HCT116 (cell line): ENCODE measurements at regions of chr5 and their contacts with region 1.

Region 1: DNA sequence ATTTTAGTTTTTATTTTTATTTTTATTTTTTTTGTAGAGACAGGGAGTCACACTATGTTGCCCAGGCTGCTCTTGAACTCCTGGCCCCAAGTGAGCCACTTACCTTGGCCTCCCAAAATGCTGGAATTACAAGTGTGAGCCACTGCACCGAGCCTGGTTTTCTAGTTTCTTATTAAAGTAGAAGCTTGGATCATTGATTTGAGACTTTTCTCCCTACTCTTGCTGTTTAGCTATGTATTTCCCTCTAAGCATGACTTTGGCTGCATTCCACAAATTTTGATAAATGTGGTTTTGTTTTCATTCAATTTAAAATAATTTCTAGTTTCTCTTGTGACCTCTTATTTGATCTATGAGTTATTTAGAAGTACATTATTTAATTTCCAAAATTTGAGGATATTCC is 10.4 kb downstream of the SNX2 start:
- DNase-seq: no peak
- ATAC-seq: no peak
- H3K4me3 ChIP-seq: no peak overlapping the region
- H3K27ac ChIP-seq: no peak overlapping the region
- H3K4me1 ChIP-seq: no peaks in the 10 kb centered on the region
- H3K27me3 ChIP-seq: no peaks in the 10 kb centered on the region
- CTCF ChIP-seq: no peak
- POLR2A ChIP-seq: no peak
- RAD21 ChIP-seq: no peak

Region 2: GRCh38 chr5:122756263-122756911 is 28.9 kb before region 1 on chr5:
- CTCF ChIA-PET with region 1: no interaction called
- POLR2A ChIA-PET with region 1: no interaction called
- RAD21 ChIA-PET with region 1: no interaction called
- intact Hi-C with region 1: loop called (anchors 1 kb)
- DNase-seq: no peak
- ATAC-seq: no peak
- H3K4me3 ChIP-seq: no peak overlapping the region
- H3K27ac ChIP-seq: no peak overlapping the region
- H3K4me1 ChIP-seq: no peaks in the 10 kb centered on the region
- H3K27me3 ChIP-seq: no peaks in the 10 kb centered on the region
- CTCF ChIP-seq: no peak
- POLR2A ChIP-seq: no peak
- RAD21 ChIP-seq: no peak

Region 3: GRCh38 chr5:123305751-123306150 is 520.5 kb after region 1 on chr5:
- CTCF ChIA-PET with region 1: no interaction called
- POLR2A ChIA-PET with region 1: no interaction called
- RAD21 ChIA-PET with region 1: no interaction called
- intact Hi-C with region 1: no loop called
- DNase-seq: no peak
- ATAC-seq: no peak
- H3K4me3 ChIP-seq: no peak overlapping the region
- H3K27ac ChIP-seq: no peak overlapping the region
- H3K4me1 ChIP-seq: no peaks in the 10 kb centered on the region
- H3K27me3 ChIP-seq: no peaks in the 10 kb centered on the region
- CTCF ChIP-seq: no peak
- POLR2A ChIP-seq: no peak
- RAD21 ChIP-seq: no peak